ENCODE measurements at regions of chr1 and their contacts with region 1.

Region 1: DNA sequence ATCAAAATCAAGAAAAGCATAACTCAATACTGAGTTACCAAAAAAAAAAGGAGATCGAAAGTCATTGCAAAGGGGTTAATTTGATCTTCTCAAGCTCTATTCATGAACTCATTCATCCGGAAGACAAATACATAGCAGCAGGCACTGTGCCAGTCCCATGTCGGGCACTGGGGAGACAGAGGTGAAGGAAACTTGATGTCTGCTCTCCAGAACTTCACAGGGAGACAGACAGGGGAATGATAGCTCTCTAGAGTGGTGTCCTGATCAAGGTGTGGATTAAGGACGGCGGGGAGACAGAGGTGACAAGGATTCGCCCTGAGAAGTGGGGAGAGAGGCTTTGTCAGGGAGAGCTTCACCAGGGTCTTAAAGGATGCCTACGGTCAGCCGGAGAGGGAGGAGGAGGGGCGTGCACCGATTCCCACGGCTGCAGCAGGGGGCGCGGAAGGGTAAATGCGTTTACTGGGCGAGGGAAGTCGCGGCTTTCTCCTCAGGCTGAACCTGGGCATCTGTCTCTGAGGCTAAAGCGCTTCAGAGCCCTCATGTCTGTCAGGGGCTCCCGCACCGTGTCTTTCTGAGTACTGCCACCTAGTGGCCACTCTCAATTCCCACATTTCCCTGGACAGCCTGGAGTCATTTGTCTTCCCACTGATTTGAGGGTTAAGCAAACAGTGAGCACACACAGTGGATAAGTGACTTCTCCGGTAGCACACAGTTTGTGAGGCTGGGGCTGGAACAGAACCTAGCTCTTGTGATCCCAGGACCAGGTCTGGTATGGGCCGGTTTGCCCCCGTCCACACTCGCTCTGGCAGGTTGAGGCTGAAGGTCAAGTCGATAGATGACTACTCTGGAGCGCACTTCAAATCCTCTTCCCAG is 152.8 kb downstream of the TENT5C start:
- DNase-seq: peak; percentile 85
- H3K4me3 ChIP-seq: peak overlapping the region; percentile 15 to 46 (median 42)
- H3K27ac ChIP-seq: no peak overlapping the region
- H3K4me1 ChIP-seq: peaks cover 0 to 18% (median 14%) of the 10 kb centered on the region in 4 donors
- H3K27me3 ChIP-seq: no peaks in the 10 kb centered on the region
- CTCF ChIP-seq: peak; percentile 51 to 87 (median 80)
- EP300 ChIP-seq: no peak
- POLR2A ChIP-seq: no peak

Region 2: GRCh38 chr1:117121776-117122697 is 636.6 kb before region 1 on chr1:
- intact Hi-C with region 1: loop called (anchors 10 kb)
- DNase-seq: peak; percentile 98
- H3K4me3 ChIP-seq: peak overlapping the region; percentile 62 to 82 (median 72)
- H3K27ac ChIP-seq: peak overlapping the region; percentile 86 to 89 (median 88)
- H3K4me1 ChIP-seq: peaks cover 0 to 19% (median 13%) of the 10 kb centered on the region in 4 donors
- H3K27me3 ChIP-seq: no peaks in the 10 kb centered on the region
- CTCF ChIP-seq: peak; percentile 58 to 68 (median 66)
- EP300 ChIP-seq: peak in 1 of 4 donors; percentile 12
- POLR2A ChIP-seq: peak in 1 of 2 donors; percentile 4

Region 3: GRCh38 chr1:117512743-117513321 is 245.8 kb before region 1 on chr1:
- intact Hi-C with region 1: loop called (anchors 2 kb)
- DNase-seq: no peak
- H3K4me3 ChIP-seq: no peak overlapping the region
- H3K27ac ChIP-seq: no peak overlapping the region
- H3K4me1 ChIP-seq: no peaks in the 10 kb centered on the region
- H3K27me3 ChIP-seq: no peaks in the 10 kb centered on the region
- CTCF ChIP-seq: peak in 3 of 4 experiments; percentile 38 to 49 (median 44)
- EP300 ChIP-seq: no peak
- POLR2A ChIP-seq: no peak

Region 4: DNA sequence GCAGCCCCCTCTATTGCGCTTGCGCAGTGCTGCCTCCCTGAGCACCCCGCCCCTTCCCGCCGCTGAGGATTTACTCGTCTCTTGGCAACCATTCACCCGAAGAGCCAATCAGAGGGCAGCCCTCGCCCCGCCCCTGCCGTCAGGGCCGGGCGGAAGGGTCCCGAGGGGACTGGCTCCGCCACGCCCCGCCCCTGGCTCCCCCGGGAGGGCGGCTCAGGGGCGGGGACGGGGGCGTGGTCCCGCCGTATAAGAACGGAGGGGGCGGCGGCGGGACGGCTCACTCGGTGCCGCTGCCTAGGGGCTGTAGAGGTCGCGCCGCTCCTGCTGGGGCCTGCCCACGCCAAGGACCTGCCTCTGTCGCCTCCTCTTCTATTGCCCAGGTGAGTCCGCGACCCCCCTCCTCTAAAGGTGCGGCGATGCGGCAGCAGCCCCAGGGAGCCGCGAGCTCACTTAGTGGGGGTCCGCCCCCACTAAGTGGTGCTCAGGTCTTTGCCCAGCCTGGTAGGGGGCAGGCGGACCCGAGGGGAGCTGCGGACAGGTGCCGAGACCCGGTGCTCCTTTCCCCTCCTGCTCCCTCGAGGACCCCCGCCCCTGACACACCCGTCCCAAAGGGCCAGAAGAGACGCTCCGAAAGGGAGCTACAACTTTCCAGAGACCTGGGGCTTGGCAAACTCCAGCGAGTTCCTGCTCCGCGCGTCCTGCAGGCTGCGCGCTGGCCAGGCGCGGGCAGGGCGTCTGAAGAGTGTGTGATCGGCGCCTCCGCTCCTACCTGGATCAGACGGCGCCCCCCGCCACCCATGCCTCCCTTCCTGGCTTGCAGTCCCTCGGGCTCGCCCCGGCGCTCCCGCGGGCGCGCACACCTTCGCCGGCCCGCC is 152.7 kb before region 1 on chr1 and contains the start of gene TENT5C:
- intact Hi-C with region 1: loop called (anchors 1 kb)
- DNase-seq: peak; percentile 99
- H3K4me3 ChIP-seq: peak within 1 kb of the TSS; percentile 55 to 82 (median 68)
- H3K27ac ChIP-seq: peak within 1 kb of the TSS; percentile 75 to 89 (median 88)
- H3K4me1 ChIP-seq: peaks cover 0 to 35% (median 27%) of the 10 kb centered on the region in 4 donors
- H3K27me3 ChIP-seq: no peaks in the 10 kb centered on the region
- CTCF ChIP-seq: no peak
- EP300 ChIP-seq: peak in 1 of 4 donors; percentile 42
- POLR2A ChIP-seq: peak; percentile 72 to 75
- total RNA-seq, gene TENT5C: 2.8 to 7.1 (median 5.1) TPM

Region 5: GRCh38 chr1:117631359-117632160 is 127.1 kb before region 1 on chr1:
- intact Hi-C with region 1: no loop called
- DNase-seq: no peak
- H3K4me3 ChIP-seq: no peak overlapping the region
- H3K27ac ChIP-seq: no peak overlapping the region
- H3K4me1 ChIP-seq: no peaks in the 10 kb centered on the region
- H3K27me3 ChIP-seq: no peaks in the 10 kb centered on the region
- CTCF ChIP-seq: no peak
- EP300 ChIP-seq: no peak
- POLR2A ChIP-seq: no peak

Region 6: GRCh38 chr1:117685936-117686806 is 72.5 kb before region 1 on chr1:
- intact Hi-C with region 1: loop called (anchors 5 kb)
- DNase-seq: no peak
- H3K4me3 ChIP-seq: no peak overlapping the region
- H3K27ac ChIP-seq: peak overlapping the region in 3 of 4 donors; percentile 38 to 63 (median 52)
- H3K4me1 ChIP-seq: peaks cover 3 to 64% (median 58%) of the 10 kb centered on the region in 4 donors
- H3K27me3 ChIP-seq: no peaks in the 10 kb centered on the region
- CTCF ChIP-seq: no peak
- EP300 ChIP-seq: no peak
- POLR2A ChIP-seq: no peak

Region 7: DNA sequence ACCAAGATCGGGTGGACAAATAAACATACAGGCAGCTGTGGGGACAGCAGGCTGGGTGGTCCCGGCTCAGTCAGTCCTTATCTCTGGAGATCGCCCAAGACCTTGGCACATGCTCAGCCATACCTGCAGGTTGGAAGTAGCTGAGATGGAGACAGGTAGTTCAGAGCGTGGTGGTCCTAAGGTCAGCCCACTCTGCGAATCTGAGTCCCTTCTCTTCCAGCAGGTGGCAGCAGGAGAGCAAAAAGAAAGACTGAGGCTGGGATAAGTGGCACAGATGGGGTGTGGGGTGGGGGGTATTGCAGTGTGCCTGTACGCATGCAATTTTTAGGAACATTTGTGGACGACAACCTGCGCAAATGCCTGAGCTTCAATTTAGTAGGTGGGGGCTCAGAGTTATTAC is 48.0 kb before region 1 on chr1:
- intact Hi-C with region 1: no loop called
- DNase-seq: no peak
- H3K4me3 ChIP-seq: no peak overlapping the region
- H3K27ac ChIP-seq: no peak overlapping the region
- H3K4me1 ChIP-seq: peaks cover 0 to 15% (median 13%) of the 10 kb centered on the region in 4 donors
- H3K27me3 ChIP-seq: no peaks in the 10 kb centered on the region
- CTCF ChIP-seq: no peak
- EP300 ChIP-seq: no peak
- POLR2A ChIP-seq: no peak

Region 8: GRCh38 chr1:117997573-117997972 is 238.9 kb after region 1 on chr1:
- intact Hi-C with region 1: no loop called
- DNase-seq: no peak
- H3K4me3 ChIP-seq: no peak overlapping the region
- H3K27ac ChIP-seq: no peak overlapping the region
- H3K4me1 ChIP-seq: no peaks in the 10 kb centered on the region
- H3K27me3 ChIP-seq: no peaks in the 10 kb centered on the region
- CTCF ChIP-seq: no peak
- EP300 ChIP-seq: no peak
- POLR2A ChIP-seq: no peak